ENCODE measurements at regions of chr2 and their contacts with region 1.

Region 1: GRCh38 chr2:190694479-190694878 is 45.6 kb downstream of the NAB1 start:
- DNase-seq: no peak
- ATAC-seq: no peak
- H3K4me3 ChIP-seq: no peak overlapping the region
- H3K27ac ChIP-seq: no peak overlapping the region
- H3K4me1 ChIP-seq: no peaks in the 10 kb centered on the region
- H3K27me3 ChIP-seq: no peaks in the 10 kb centered on the region
- CTCF ChIP-seq: no peak

Region 2: DNA sequence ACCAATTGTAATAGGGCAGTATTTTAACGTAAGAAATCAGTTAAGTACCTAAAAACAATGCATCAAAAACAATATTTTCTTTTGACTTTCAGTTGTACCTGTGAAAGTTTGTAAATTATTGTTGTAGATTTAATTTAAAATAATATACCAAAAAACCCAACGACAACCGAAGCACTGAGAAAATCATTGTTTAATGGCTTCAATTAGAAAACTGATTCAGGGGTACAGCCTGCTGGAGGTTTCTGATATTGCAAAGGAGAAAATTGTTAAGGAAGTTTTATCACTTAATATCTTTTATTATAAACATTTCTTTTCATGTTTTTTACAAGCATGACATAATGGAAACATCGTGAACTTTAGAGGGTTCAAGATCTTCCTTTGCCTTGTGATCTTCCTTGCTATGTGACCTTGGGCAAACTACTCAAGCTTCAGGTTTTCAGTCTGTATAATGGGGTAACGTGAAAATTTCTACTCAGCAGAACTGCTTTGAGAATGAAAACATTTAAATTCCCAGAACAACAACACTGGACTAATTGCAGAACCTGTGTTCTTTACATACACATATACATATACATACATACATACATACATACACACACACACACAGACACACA is 109.8 kb after region 1 on chr2:
- CTCF ChIA-PET with region 1: no interaction called
- POLR2A ChIA-PET with region 1: no interaction called
- intact Hi-C with region 1: no loop called
- DNase-seq: peak; percentile 69
- ATAC-seq: no peak
- H3K4me3 ChIP-seq: no peak overlapping the region
- H3K27ac ChIP-seq: no peak overlapping the region
- H3K4me1 ChIP-seq: peaks cover 4% of the 10 kb centered on the region
- H3K27me3 ChIP-seq: no peaks in the 10 kb centered on the region
- CTCF ChIP-seq: peak; percentile 79

Region 3: DNA sequence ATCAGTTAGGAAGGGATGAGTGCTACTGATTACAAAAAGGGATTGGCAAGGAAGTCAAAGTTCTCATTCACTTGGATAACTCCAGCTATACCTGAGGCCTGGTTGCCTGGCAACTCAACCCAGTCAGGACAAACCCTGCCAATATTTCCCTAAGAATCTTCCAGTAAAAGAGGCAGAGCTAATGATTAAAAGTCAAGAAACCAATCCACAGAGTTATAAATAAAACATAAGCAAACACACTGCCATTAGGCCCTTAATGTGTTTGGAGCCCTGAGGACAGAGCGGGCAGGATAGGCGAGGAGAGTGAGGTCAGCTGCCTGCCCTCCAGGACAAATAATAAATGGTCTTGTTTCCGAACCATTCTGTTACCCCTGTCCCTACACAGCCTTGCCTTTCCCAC is 767.9 kb after region 1 on chr2:
- CTCF ChIA-PET with region 1: no interaction called
- POLR2A ChIA-PET with region 1: interaction called, 11 read pairs
- intact Hi-C with region 1: no loop called
- DNase-seq: no peak
- ATAC-seq: no peak
- H3K4me3 ChIP-seq: no peak overlapping the region
- H3K27ac ChIP-seq: no peak overlapping the region
- H3K4me1 ChIP-seq: peaks cover 8% of the 10 kb centered on the region; the same call in 1 of the 2 replicates
- H3K27me3 ChIP-seq: no peaks in the 10 kb centered on the region
- CTCF ChIP-seq: no peak